Mammary epithelial cell (primary cell): ENCODE measurements at regions of chr13 and their contacts with region 1.

Region 1: DNA sequence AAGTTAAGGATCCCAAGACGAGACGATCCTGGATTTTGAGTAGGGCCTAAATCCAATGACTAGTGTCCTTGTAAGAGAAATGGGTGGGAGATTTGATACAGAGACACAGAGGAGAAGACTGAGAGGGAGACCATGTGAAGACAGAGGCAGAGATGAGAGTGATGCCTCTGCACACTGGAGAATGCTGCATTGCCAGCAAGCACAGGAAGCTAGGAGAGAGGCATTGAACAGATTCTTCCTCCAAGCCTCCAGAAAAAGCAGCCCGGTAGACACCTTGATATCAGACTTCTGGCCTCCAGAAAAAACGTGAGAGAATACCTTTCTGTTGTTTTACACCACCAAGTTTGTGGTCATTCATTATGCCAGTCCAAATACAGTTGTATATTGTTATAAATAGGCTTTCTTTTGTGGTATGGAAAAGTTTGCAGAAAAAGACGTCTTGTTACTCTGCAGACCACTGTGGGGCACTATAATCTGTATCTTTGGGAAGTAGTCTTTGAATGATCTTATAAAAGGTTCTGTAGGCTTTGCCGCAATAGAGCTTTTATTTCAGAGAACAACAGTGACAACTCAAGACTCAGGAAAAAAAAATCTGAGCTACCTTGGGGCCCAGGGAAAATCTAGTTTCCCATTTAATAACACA is 17.9 kb upstream of the RFC3 start:
- DNase-seq: peak; percentile 11
- H3K4me3 ChIP-seq: no peak overlapping the region
- H3K27ac ChIP-seq: no peak overlapping the region
- H3K4me1 ChIP-seq: peaks cover 8% of the 10 kb centered on the region
- H3K27me3 ChIP-seq: no peaks in the 10 kb centered on the region
- CTCF ChIP-seq: peak; percentile 48 to 55

Region 2: DNA sequence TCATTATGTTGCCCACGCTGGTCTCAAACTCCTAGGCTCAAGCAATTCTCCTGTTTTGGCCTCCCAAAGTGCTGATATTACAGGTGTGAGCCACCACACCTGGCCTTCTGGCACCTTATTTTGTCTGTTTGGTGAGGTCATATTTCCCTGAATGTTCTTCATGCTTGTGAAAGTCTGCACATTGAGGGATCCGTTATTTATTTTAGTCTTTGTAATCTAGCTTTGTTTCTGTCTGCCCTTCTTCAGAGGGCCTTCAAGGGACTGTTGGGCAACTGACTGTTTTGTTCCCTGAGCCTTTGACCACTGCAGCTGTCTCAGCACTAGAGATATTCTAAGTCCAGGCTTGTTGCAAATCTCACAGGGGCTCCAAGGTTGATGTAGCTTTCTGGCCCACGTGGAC is 92.6 kb before region 1 on chr13:
- CTCF ChIA-PET with region 1: no interaction called
- dilution Hi-C with region 1: no loop called
- in situ Hi-C with region 1: no loop called
- intact Hi-C with region 1: no loop called
- DNase-seq: no peak
- H3K4me3 ChIP-seq: no peak overlapping the region
- H3K27ac ChIP-seq: no peak overlapping the region
- H3K4me1 ChIP-seq: no peaks in the 10 kb centered on the region
- H3K27me3 ChIP-seq: no peaks in the 10 kb centered on the region
- CTCF ChIP-seq: no peak

Region 3: DNA sequence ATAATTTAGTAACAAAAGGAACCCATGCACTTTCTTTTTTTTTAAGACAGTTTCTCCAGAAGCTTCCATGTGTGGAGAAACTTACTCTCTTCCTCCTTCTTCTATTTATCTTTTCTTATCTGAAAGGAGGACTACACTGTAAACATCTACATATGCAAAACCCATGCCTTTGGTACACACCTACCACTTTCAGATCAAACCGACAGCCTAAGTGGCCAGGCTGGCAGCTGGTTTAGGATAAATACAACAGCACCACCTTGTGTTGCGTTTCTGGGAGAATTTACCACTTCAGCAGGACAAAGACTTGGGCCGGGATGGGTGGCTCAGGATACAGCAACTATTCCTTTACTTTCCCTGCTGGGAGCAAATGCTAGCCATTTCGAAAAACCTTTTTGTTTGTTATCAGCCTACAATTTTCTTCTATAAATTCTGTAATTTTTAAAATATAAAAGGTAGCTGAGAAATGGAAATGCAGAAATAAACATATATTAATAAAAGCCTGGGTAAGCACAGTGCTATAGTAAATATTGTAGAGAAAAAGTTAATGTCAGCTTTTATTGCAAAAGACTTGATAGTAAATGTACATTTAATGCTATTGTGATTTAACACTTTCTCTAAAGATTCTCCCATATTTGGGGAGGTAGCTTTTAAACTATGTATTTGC is 76.2 kb before region 1 on chr13:
- CTCF ChIA-PET with region 1: no interaction called
- dilution Hi-C with region 1: no loop called
- in situ Hi-C with region 1: no loop called
- intact Hi-C with region 1: no loop called
- DNase-seq: peak; percentile 64
- H3K4me3 ChIP-seq: no peak overlapping the region
- H3K27ac ChIP-seq: no peak overlapping the region
- H3K4me1 ChIP-seq: peaks cover 11% of the 10 kb centered on the region
- H3K27me3 ChIP-seq: no peaks in the 10 kb centered on the region
- CTCF ChIP-seq: peak; percentile 67 to 84

Region 4: GRCh38 chr13:35164324-35164932 is 1364.4 kb after region 1 on chr13:
- CTCF ChIA-PET with region 1: interaction called, 4 read pairs
- dilution Hi-C with region 1: no loop called
- in situ Hi-C with region 1: no loop called
- intact Hi-C with region 1: loop called (anchors 5 kb)
- DNase-seq: peak; percentile 6
- H3K4me3 ChIP-seq: no peak overlapping the region
- H3K27ac ChIP-seq: no peak overlapping the region
- H3K4me1 ChIP-seq: no peaks in the 10 kb centered on the region
- H3K27me3 ChIP-seq: no peaks in the 10 kb centered on the region
- CTCF ChIP-seq: peak; percentile 50 to 63